Right cardiac atrium (tissue), 5 donors: ENCODE measurements at regions of chr6 and their contacts with region 1.

Region 1: DNA sequence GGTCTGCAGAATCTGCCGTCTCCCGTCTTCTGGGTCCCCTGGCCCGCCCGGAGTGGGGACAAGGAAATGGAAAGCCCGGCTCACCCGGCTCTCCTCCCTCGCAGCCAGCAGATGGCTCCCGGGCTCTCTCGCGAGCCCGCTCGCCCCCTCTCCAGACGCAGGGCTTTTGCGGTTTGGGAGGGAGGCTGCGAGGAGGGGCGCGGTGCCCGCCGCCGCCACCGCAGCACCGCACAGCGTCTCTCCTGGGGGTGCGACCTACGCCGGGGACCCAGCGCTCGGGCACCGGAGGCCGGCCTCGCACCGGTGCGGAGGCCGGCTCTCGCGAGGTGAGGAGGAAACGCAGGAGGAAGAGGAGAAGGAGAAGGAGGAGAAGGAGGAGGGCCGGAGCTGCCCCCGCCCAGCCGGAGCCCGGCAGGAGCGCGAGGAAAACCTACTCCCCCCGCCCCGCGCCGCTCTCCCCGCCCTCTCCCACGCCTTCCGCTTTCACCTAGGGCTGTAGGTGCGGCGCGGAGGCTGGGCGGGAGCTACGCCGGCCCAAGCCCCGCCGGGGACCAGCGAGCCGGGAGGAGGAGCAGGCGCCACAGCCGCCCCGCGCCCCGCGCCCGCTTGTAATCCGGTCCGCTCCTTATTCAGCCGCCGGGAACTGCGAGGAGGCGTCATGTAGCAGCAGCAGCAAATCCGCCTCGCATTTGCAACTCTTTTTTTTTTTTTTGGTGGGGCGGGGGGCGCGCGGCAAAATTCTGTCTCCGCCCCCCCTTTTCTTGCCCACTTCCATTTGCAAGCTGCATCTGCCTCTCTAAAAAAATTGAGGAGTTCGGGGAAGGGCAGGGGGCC is at the start of gene CARMIL1:
- DNase-seq: peak; percentile 81 to 93 (median 91)
- ATAC-seq: peak; percentile 92 to 95
- H3K4me3 ChIP-seq: peak within 1 kb of the TSS; percentile 69
- H3K27ac ChIP-seq: peak within 1 kb of the TSS; percentile 82
- H3K4me1 ChIP-seq: peaks cover 3% of the 10 kb centered on the region
- H3K27me3 ChIP-seq: no peaks in the 10 kb centered on the region
- total RNA-seq, gene CARMIL1: 16.8 to 19.8 (median 18.1) TPM

Region 2: GRCh38 chr6:25413207-25413905 is 134.2 kb after region 1 on chr6:
- intact Hi-C with region 1: loop called in 1 of 4 experiments (anchors 10 kb)
- DNase-seq: no peak
- ATAC-seq: no peak
- H3K4me3 ChIP-seq: no peak overlapping the region
- H3K27ac ChIP-seq: no peak overlapping the region
- H3K4me1 ChIP-seq: peaks cover 18% of the 10 kb centered on the region
- H3K27me3 ChIP-seq: no peaks in the 10 kb centered on the region

Region 3: GRCh38 chr6:25490018-25490801 is 211.1 kb after region 1 on chr6:
- intact Hi-C with region 1: loop called (anchors 2 to 5 kb)
- DNase-seq: peak; percentile 69 to 80 (median 78)
- ATAC-seq: peak; percentile 81 to 82
- H3K4me3 ChIP-seq: no peak overlapping the region
- H3K27ac ChIP-seq: no peak overlapping the region
- H3K4me1 ChIP-seq: peaks cover 2% of the 10 kb centered on the region
- H3K27me3 ChIP-seq: no peaks in the 10 kb centered on the region